ENCODE measurements at regions of chr6 and their contacts with region 1.

Region 1: GRCh38 chr6:137313928-137314855 is 95.0 kb upstream of the IFNGR1 start:
- DNase-seq: peak in 1 of 2 experiments; percentile 55
- H3K4me3 ChIP-seq: no peak overlapping the region
- H3K27ac ChIP-seq: no peak overlapping the region
- H3K4me1 ChIP-seq: peaks cover 0 to 3% (median 2%) of the 10 kb centered on the region in 4 experiments; a peak in 3 of 7 replicates
- H3K27me3 ChIP-seq: no peaks in the 10 kb centered on the region
- CTCF ChIP-seq: peak; percentile 71 to 81 (median 73)
- EP300 ChIP-seq: no peak
- POLR2A ChIP-seq: no peak
- RAD21 ChIP-seq: peak; percentile 88 to 91

Region 2: GRCh38 chr6:137271245-137272183 is 42.7 kb before region 1 on chr6:
- CTCF ChIA-PET with region 1: interaction called, 29 read pairs
- POLR2A ChIA-PET with region 1: no interaction called
- DNase-seq: no peak
- H3K4me3 ChIP-seq: no peak overlapping the region
- H3K27ac ChIP-seq: no peak overlapping the region
- H3K4me1 ChIP-seq: no peaks in the 10 kb centered on the region
- H3K27me3 ChIP-seq: no peaks in the 10 kb centered on the region
- CTCF ChIP-seq: peak in 2 of 3 experiments; percentile 75 to 78; a peak in 3 of 4 replicates
- EP300 ChIP-seq: no peak
- POLR2A ChIP-seq: no peak
- RAD21 ChIP-seq: peak; percentile 95 to 96

Region 3: DNA sequence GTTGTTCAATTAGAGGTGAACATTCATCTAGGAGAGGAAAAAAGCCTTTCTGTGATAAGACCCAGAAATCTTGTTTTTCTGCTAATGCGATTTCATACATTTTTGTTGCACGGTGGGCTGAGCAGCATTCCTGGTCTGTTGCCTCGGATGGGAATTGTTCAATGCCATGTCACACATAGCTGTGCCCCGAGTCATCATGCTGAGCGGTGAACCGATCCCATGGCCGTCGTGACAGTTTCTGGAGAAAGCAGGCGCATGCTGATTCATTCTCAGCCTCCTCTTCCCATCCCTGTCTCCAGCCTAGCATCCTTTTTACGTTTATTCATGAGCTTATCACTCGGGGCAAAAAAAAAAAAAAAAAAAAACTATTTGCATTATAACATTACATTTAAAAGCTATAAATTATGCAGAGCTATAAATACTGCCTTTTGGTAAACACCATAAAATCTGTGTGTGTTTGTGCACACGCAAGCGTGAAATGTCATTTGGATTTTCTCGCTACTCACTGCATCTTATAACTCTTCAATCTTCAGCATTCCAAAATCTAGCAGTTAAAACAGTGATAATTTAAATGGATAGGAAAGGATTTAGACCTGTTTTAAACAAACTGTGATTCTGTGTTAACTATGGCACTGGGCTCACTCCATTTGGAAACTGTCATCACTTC is 36.1 kb before region 1 on chr6:
- CTCF ChIA-PET with region 1: interaction called, 20 read pairs
- POLR2A ChIA-PET with region 1: no interaction called
- DNase-seq: peak in 1 of 2 experiments; percentile 58
- H3K4me3 ChIP-seq: no peak overlapping the region
- H3K27ac ChIP-seq: no peak overlapping the region
- H3K4me1 ChIP-seq: peaks cover 0 to 4% (median 2%) of the 10 kb centered on the region in 4 experiments; a peak in 2 of 7 replicates
- H3K27me3 ChIP-seq: peaks cover 0 to 2% (median 0%) of the 10 kb centered on the region in 4 experiments; a peak in 1 of 7 replicates
- CTCF ChIP-seq: no peak
- EP300 ChIP-seq: no peak
- POLR2A ChIP-seq: no peak
- RAD21 ChIP-seq: no peak

Region 4: DNA sequence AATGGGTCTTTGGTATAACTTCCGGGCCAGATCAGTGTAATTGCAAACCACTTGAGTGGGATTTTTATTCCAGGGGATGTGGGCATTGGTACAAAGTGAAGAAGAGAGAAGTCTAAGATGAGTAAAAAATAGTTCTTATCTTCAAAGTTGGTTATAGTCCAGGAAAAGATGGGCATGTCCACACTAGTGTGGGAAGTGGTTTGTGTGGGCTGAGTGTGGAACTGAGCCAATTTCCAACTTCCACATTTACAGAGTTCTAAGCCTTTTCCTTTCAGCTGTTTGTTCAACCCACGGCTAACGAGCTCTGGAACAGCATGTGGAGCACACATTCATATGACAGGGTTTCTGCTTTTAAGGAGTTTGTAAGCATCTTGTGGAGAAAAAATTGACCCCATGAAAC is 22.8 kb before region 1 on chr6:
- CTCF ChIA-PET with region 1: interaction called, 11 read pairs
- POLR2A ChIA-PET with region 1: no interaction called
- DNase-seq: no peak
- H3K4me3 ChIP-seq: no peak overlapping the region
- H3K27ac ChIP-seq: no peak overlapping the region
- H3K4me1 ChIP-seq: peaks cover 0 to 8% (median 5%) of the 10 kb centered on the region in 4 experiments; a peak in 3 of 7 replicates
- H3K27me3 ChIP-seq: no peaks in the 10 kb centered on the region
- CTCF ChIP-seq: no peak
- EP300 ChIP-seq: no peak
- POLR2A ChIP-seq: no peak
- RAD21 ChIP-seq: no peak

Region 5: GRCh38 chr6:137297887-137298286 is 16.3 kb before region 1 on chr6:
- CTCF ChIA-PET with region 1: interaction called, 22 read pairs
- POLR2A ChIA-PET with region 1: no interaction called
- DNase-seq: peak; percentile 66 to 82
- H3K4me3 ChIP-seq: peak overlapping the region in 1 of 4 experiments; percentile 35; a peak in 1 of 8 replicates
- H3K27ac ChIP-seq: no peak overlapping the region
- H3K4me1 ChIP-seq: peaks cover 1 to 20% (median 11%) of the 10 kb centered on the region in 4 experiments; a peak in 6 of 7 replicates
- H3K27me3 ChIP-seq: no peaks in the 10 kb centered on the region; a peak in 1 of 7 replicates
- CTCF ChIP-seq: no peak
- EP300 ChIP-seq: peak in 1 of 2 experiments; percentile 66; a peak in 1 of 3 replicates
- POLR2A ChIP-seq: no peak
- RAD21 ChIP-seq: peak; percentile 20 to 33; a peak in 3 of 4 replicates

Region 6: DNA sequence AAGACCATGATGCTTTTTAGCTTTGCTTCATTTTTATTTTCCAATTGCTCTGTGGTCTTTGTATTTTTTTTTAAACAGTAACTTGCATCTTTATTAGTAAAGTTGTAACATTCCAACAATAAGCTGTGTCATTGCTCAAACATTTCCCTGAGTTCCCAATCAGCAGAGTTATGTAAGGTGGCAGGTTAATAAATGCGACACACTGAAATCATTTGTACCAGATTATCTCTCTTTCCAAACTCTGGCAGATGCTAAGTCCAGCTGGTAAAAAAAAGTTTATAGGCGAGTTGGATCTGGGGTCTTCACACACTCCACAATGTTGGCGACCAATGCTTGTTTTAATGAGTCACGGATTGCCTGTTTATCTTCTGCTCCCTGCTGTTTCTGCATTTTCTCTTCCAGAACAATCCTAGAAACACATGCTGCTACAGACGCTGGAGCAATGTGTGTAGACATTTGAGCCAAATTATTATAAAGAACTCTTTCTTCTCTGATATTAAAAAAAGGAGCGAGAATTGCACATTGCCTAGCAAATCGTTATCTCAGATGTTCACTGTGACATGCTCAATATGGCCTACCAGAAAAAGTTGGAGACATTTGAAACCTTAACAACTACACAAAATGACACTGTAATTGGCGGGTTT is 18.6 kb after region 1 on chr6:
- CTCF ChIA-PET with region 1: interaction called, 14 read pairs
- POLR2A ChIA-PET with region 1: no interaction called
- DNase-seq: no peak
- H3K4me3 ChIP-seq: no peak overlapping the region
- H3K27ac ChIP-seq: no peak overlapping the region
- H3K4me1 ChIP-seq: no peaks in the 10 kb centered on the region
- H3K27me3 ChIP-seq: no peaks in the 10 kb centered on the region
- CTCF ChIP-seq: no peak
- EP300 ChIP-seq: no peak
- POLR2A ChIP-seq: no peak
- RAD21 ChIP-seq: no peak